Gastrocnemius medialis (tissue), 4 donors: ENCODE measurements at regions of chr19 and their contacts with region 1.

Region 1: DNA sequence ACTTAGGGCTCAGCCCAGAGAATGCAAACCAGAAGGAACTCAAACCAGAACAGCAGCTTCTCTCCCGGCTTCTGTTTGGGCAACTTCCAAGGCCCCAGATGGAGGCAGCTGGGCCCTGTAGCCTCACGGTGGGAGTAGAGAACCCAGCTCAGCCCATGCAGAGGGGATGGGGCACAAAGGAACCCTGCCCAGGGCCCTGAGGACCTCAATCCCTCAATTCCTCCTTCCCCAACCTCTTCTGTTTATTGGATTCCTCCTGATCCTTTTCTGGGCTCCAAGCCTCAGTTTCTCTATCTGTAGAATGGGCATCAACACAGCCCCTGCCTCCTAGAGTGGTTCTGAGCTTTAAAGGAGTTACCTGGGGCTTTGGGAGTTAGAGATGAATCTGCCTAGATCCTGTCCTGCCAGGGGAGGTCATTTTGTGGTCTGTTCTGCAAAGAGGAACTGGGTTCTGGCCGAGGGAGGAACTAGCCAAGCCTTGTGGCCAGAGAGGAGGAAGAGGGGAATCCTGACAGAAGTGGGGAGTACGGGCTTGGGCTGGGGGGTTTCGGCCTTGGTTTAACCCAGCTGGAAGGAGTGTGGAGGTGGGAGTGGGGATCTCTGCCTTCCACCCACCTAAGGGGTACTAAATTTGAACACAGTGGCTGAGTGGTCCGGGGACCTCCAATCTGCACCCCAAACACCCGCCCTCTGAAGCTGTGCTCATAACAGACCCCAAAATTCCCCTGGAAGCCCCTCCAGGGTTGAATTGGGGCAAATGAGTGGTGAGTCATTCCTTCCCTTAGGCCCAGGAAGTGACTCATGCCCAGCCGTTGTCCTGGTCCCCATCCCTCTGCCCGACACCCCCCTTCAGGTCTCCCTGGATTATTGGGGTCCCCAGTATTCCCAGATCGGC is 2.7 kb downstream of the ADGRE5 start:
- DNase-seq: peak; percentile 27 to 47
- ATAC-seq: no peak
- H3K4me3 ChIP-seq: peak overlapping the region; percentile 33 to 74 (median 38)
- H3K27ac ChIP-seq: peak overlapping the region; percentile 64 to 97 (median 86)
- H3K4me1 ChIP-seq: peaks cover 29 to 30% of the 10 kb centered on the region in 2 donors
- H3K27me3 ChIP-seq: no peaks in the 10 kb centered on the region
- CTCF ChIP-seq: no peak
- POLR2A ChIP-seq: no peak

Region 2: GRCh38 chr19:14419106-14419813 is 35.4 kb after region 1 on chr19 and contains the start of gene DDX39A:
- in situ Hi-C with region 1: no loop called
- intact Hi-C with region 1: loop called (anchors 1 kb)
- DNase-seq: peak; percentile 99
- ATAC-seq: peak; percentile 100
- H3K4me3 ChIP-seq: peak within 1 kb of the TSS; percentile 86 to 95 (median 89)
- H3K27ac ChIP-seq: peak within 1 kb of the TSS; percentile 93 to 98 (median 96)
- H3K4me1 ChIP-seq: peaks cover 18% of the 10 kb centered on the region in 2 donors
- H3K27me3 ChIP-seq: no peaks in the 10 kb centered on the region
- CTCF ChIP-seq: peak in 1 of 5 experiments; percentile 11
- POLR2A ChIP-seq: peak; percentile 92 to 93
- total RNA-seq, gene DDX39A: 23.9 to 59.2 (median 41.3) TPM